Posterior cingulate gyrus (tissue), 11 donors: ENCODE measurements at regions of chr16 and their contacts with region 1.

Region 1: GRCh38 chr16:30747799-30748634 is at the start of gene PHKG2:
- DNase-seq: peak; percentile 98 to 100 (median 100)

Region 2: DNA sequence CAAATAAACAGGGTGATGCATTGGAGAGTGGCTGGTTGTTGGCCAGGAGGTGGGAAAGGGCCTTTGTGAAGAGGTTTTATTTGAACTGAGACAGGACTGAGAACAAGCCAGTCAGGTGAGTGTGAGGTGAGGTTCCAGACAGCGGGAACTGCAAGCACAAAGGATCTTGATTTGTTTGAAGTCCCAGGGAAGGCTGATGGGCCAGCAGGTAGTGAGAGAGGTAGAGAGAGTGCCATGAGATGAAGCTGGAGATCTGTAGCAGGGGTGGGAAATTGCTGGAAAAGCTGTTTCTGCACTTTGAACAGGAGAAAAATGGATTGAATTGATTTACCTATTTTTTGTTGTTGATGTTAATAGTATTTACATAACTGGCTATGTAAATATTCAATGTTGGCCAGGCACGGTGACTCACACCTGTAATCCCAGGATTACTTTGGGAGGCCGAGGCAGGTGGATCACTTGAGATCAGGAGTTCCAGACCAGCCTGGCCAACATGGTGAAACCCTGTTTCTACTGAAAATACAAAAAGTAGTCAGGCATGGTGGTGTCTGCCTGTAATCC is 310.5 kb before region 1 on chr16:
- intact Hi-C with region 1: loop called (anchors 5 kb)
- DNase-seq: no peak

Region 3: DNA sequence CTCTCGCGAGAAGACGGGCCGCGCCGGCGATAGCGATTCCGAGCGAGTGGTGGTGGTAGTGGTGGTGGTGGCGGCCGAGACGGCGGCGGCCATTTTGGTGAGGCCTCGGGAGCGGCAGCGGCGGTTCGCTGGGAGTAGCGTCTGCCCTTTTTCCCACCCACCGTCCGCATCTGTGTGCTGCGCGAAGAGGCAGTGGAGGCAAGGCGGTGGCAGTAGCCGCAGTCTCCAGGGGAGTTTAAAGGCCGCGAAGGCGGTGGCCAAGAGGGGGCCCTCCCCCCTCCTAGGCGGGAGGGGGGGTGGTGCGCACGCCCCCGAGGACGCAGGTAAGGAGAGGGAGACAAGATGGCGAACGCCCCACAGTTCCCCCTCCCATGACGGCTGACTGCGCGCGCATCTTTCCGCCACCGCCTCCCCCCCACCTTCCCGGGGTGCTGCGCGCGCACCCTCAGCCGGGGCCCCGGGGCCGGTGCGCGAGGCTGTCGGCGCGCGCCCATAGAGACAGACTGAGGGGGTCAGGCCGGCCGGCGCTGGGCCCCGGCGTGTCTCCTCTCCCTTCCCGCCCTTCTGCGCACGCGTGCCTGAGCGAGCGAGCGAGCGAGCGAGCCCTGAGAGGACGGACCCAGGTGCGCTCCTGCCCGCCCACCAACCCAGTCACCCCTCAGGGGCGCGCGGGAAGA is 49.7 kb before region 1 on chr16:
- intact Hi-C with region 1: loop called (anchors 2 kb)
- DNase-seq: peak; percentile 79 to 99 (median 84)

Region 4: DNA sequence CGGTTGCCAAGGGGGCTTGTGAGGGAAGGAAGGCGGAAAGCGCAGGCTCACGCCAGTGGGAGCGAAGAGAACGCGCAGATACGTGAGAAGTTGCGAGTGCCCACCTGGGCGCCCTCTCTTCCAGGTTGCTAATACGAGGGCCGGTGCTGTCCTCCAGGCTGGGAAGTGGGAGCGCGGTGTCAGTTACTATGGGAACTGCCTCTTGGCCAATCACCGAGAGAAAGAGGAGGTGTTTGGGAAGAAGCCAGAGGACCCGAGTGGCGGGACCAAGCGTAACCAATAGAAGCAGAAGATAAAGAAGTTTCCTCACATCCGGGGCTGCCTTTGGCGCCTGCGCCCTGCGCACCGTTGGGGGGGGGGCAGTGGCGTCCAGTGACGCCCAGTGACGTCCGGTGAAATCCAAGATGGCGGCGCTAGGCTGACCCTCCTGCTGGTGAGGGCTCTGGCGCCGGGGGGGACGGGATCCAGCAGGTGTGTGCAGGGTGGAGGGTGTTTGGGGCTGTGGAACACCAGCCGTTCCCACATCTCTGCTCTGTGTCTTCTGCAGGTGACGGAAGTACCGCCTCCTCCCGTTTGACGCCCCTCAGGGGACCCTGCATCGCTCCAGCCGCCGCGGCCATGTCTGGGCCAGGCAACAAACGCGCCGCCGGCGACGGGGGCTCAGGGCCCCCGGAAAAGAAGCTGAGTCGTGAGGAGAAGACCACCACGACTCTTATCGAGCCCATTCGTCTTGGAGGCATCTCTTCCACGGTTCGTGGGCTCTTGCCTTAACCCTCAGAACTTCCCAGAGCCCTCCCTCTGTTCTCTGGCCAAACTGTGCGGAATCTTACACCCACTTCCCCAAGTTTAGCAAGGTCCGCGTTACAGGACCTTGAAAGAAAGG is 14.2 kb after region 1 on chr16 and contains the starts of genes CFAP119 and RNF40:
- intact Hi-C with region 1: loop called (anchors 2 kb)
- DNase-seq: peak; percentile 92 to 99 (median 96)

Region 5: DNA sequence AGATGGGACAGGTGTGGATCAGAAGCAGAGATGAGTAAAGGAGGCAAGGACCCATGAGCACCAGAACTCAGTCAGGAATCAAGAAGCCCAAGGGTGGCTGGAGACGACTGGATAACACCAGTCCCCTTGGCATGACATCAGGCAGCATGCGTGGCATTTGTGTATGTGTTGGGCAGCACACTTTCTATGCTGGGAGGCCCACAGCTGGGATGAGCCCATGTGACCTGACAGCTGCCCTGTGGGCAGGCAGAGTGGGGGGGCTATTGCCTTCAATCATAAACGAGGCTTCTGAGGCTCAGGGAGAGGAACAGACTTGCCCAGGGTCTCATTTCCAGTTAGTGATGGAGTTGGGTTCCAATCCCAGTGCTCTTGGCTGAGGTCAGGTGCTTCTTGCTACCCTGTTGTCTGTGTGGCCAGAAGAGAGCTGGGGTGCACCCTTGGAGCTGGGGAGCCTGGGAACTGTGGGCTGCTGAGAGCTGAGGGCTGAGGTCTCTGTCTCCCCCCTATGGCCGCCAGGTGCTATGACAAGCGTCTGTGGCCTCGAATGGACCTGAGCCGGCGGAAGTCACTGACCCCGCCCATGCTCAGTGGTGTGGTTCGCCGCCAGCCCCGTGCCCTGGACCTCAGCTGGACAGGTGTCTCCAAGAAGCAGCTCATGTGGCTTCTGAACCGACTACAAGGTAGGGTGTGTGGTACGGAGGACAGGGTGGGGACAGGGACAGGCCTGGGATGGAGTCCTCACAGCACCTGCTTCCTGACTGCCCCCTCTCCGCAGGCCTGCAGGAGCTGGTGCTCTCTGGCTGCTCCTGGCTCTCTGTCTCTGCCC is 193.8 kb after region 1 on chr16:
- intact Hi-C with region 1: no loop called
- DNase-seq: peak in 9 of 10 donors; percentile 42 to 94 (median 65)